Panc1 (cell line): ENCODE measurements at regions of chr4 and their contacts with region 1.

Region 1: DNA sequence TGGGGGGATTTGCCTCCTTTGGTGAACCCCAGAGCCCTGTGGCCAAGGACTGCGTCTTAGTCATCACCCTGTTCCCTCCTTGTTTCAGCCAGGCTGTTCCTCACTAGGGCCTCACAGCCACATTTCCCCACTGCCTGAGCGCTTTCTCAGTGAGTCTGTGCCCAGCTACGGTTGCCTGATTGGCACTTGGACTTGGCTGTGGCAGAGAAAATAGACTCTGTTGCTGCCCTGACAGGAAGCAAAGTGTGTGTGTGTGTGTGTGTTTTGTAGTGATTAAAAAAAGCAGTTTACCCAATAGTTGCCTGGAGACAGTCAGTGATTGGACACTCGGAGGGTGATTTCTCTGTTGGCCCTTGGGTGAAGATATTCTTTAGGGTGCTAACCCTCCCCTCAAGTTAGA is 113.0 kb downstream of the UCHL1 start:
- DNase-seq: no peak
- ATAC-seq: no peak
- H3K4me3 ChIP-seq: no peak overlapping the region
- H3K27ac ChIP-seq: no peak overlapping the region
- H3K4me1 ChIP-seq: no peaks in the 10 kb centered on the region
- H3K27me3 ChIP-seq: no peaks in the 10 kb centered on the region; the same call in 1 of the 2 replicates
- CTCF ChIP-seq: no peak

Region 2: DNA sequence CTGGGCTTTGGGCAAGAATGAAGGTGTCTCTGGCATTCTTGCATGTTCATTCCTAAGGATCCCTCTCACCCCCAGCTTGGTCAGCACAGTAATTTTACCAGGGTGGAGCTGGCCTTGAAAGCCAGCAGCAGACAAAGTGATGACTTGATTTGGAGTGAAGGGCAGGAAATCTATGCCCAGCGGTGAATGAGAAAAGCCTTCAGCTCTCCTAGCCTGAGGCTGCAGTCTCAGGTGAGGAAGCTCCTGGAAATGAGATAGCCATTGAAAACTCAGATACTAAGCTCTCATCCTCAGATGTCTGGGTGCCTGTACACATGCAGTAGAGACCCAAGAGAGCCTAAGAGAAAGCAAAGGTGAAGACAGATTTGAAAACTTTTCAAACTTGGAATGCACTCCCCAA is 123.7 kb before region 1 on chr4:
- CTCF ChIA-PET with region 1: no interaction called
- POLR2A ChIA-PET with region 1: no interaction called
- in situ Hi-C with region 1: no loop called
- intact Hi-C with region 1: no loop called
- DNase-seq: no peak
- ATAC-seq: no peak
- H3K4me3 ChIP-seq: no peak overlapping the region
- H3K27ac ChIP-seq: no peak overlapping the region
- H3K4me1 ChIP-seq: no peaks in the 10 kb centered on the region
- H3K27me3 ChIP-seq: no peaks in the 10 kb centered on the region
- CTCF ChIP-seq: no peak

Region 3: DNA sequence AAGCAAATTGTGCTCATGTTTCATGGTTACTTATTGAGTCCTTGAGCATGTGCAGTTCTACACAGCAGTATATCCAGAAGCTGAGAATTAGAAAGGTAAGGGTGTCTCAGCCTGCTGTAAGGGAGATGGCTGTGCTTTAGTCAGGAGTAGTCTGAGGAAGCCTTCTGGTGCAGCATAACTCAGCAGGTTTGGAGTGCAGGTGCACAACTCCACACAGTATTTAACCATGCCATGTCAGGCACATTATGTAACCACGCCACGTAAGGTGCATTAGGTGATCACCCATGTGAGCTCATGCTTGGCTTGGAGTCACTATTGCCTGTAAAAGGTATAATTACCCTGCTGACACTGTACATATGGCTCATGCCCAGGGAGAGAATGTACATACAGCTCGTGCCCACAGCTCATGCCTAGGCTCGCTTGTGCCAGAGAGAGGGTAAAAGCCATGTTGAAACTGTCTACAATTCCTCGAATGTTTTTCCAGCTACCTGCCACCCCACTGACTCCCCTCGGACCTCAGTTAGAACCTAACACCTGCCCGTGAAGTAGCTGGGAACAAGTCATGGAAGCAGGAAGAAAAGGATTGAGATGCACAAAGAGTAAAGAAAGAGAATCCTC is 75.1 kb before region 1 on chr4:
- CTCF ChIA-PET with region 1: no interaction called
- POLR2A ChIA-PET with region 1: no interaction called
- in situ Hi-C with region 1: no loop called
- intact Hi-C with region 1: loop called (anchors 10 kb)
- DNase-seq: no peak
- ATAC-seq: no peak
- H3K4me3 ChIP-seq: no peak overlapping the region
- H3K27ac ChIP-seq: no peak overlapping the region
- H3K4me1 ChIP-seq: no peaks in the 10 kb centered on the region
- H3K27me3 ChIP-seq: no peaks in the 10 kb centered on the region
- CTCF ChIP-seq: no peak

Region 4: DNA sequence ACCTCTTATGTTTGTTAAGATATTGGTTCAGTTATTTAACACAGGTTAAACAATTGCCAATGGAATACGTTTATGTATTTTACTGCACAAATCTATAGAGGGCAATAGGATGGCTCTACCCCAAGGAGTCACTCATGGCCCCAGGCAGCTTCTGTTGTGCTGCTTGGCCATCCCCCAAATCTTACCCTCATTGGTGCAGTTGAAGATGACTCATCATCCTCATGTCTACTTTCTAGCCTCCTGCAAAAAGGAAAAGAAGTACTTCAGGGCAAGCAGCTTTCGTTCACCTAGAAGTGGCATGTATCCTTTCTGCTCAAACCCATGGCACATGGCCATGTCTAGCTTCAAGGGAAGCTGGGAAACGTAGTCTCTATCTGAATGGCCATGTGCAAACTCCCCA is 364.7 kb after region 1 on chr4:
- CTCF ChIA-PET with region 1: no interaction called
- POLR2A ChIA-PET with region 1: no interaction called
- in situ Hi-C with region 1: no loop called
- intact Hi-C with region 1: no loop called
- DNase-seq: no peak
- ATAC-seq: no peak
- H3K4me3 ChIP-seq: no peak overlapping the region
- H3K27ac ChIP-seq: no peak overlapping the region
- H3K4me1 ChIP-seq: no peaks in the 10 kb centered on the region
- H3K27me3 ChIP-seq: no peaks in the 10 kb centered on the region; the same call in 1 of the 2 replicates
- CTCF ChIP-seq: no peak